ENCODE measurements at regions of chr6 and their contacts with region 1.

Region 1: DNA sequence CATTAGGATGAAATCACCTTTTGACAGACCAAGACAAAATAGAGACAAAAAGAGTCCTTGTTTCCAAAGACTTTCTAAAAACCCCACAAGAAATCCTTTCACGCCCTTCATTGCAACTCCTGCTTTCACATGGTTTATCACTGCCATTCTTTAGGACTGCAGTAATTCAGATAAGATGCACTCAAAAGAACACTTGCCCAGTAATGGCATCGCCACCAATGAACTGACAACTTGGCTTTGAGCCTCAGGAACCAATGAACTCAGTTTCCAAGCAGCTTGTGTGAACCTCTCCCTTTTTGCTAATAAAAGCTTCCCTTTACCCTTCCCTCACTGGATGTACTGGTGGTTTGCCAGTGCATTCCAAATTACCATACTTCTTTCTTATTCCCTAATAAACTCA is 21.8 kb downstream of the OSTM1 start:
- DNase-seq: no peak
- ATAC-seq: no peak
- H3K4me3 ChIP-seq: no peak overlapping the region
- H3K4me3 Mint-ChIP-seq: no peak overlapping the region
- H3K27ac ChIP-seq: no peak overlapping the region
- H3K27ac Mint-ChIP-seq: no peak overlapping the region
- H3K4me1 ChIP-seq: no peaks in the 10 kb centered on the region
- H3K4me1 Mint-ChIP-seq: no peaks in the 10 kb centered on the region
- H3K27me3 ChIP-seq: no peaks in the 10 kb centered on the region
- H3K27me3 Mint-ChIP-seq: no peaks in the 10 kb centered on the region
- CTCF ChIP-seq: no peak

Region 2: GRCh38 chr6:106637717-106638341 is 1414.9 kb before region 1 on chr6:
- CTCF ChIA-PET with region 1: no interaction called
- POLR2A ChIA-PET with region 1: no interaction called
- intact Hi-C with region 1: loop called in 1 of 2 experiments (anchors 10 kb)
- DNase-seq: no peak
- ATAC-seq: no peak
- H3K4me3 ChIP-seq: no peak overlapping the region
- H3K4me3 Mint-ChIP-seq: no peak overlapping the region
- H3K27ac ChIP-seq: no peak overlapping the region
- H3K27ac Mint-ChIP-seq: no peak overlapping the region
- H3K4me1 ChIP-seq: no peaks in the 10 kb centered on the region
- H3K4me1 Mint-ChIP-seq: peaks cover 43% of the 10 kb centered on the region
- H3K27me3 ChIP-seq: no peaks in the 10 kb centered on the region
- H3K27me3 Mint-ChIP-seq: no peaks in the 10 kb centered on the region
- CTCF ChIP-seq: no peak

Region 3: DNA sequence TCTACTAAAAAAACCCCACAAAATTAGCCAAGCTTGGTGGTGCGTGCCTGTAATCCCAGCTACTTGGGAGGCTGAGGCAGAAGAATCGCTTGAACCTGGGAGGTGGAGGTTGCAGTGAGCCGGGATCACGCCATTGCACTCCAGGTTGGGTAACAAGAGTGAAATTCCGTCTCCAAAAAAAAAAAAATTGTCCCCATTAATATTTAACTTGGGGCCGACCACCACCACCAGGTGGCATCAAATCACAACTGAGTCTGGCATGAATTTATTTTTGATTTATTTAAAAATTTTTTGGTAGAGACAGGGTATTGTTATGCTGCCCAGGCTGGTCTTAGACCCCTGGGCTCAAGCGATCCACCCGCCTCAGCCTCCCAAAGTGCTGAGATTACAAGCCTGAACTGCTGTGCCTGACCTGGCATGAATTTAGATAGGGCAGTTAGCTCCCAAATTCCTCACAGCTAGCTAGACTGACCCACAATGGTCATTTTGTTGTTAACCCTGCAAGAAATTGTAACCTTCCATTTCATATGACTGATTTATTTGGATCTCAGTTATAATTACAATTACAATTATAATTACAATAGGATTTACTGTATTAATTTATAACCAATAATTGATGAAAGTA is 920.3 kb before region 1 on chr6:
- CTCF ChIA-PET with region 1: no interaction called
- POLR2A ChIA-PET with region 1: no interaction called
- intact Hi-C with region 1: loop called in 1 of 2 experiments (anchors 2 kb)
- DNase-seq: peak in 5 of 9 experiments; percentile 20 to 44 (median 33)
- ATAC-seq: no peak
- H3K4me3 ChIP-seq: no peak overlapping the region
- H3K4me3 Mint-ChIP-seq: no peak overlapping the region
- H3K27ac ChIP-seq: no peak overlapping the region
- H3K27ac Mint-ChIP-seq: no peak overlapping the region
- H3K4me1 ChIP-seq: no peaks in the 10 kb centered on the region
- H3K4me1 Mint-ChIP-seq: no peaks in the 10 kb centered on the region
- H3K27me3 ChIP-seq: no peaks in the 10 kb centered on the region
- H3K27me3 Mint-ChIP-seq: peaks cover 2% of the 10 kb centered on the region
- CTCF ChIP-seq: peak; percentile 39

Region 4: DNA sequence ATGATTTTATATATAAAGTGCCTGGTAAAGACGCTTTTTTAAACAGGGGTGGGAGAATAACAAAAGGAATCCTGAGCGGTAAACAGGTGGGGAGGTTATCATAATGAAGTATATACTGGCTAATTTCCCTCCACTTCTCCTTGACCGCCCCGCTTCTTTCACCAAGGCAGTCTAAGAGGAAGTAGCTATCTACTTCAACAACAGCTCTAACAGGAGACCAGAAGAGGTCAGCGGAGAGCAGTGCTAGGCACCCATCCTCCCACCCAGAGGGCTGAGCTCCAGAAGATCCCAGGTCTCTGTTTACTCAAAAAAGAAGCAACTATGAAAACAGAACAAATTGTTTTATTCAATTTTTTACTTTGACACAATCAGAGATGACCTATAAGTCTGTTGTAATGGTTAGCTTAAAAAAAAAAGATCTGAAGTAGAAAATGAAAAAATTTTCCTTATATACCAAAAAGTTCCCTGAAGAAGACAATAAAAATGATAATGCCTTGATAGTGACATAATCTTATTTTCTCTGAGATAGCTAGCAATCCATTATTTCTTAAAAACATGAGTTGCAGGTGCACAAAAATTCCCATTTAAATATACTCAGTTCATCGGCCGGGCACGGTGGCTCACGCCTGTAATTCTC is 734.5 kb before region 1 on chr6:
- CTCF ChIA-PET with region 1: interaction called, 3 read pairs
- POLR2A ChIA-PET with region 1: no interaction called
- intact Hi-C with region 1: loop called in 1 of 2 experiments (anchors 10 kb)
- DNase-seq: peak in 3 of 9 experiments; percentile 7 to 49 (median 34)
- ATAC-seq: peak; percentile 49
- H3K4me3 ChIP-seq: no peak overlapping the region
- H3K4me3 Mint-ChIP-seq: no peak overlapping the region
- H3K27ac ChIP-seq: no peak overlapping the region
- H3K27ac Mint-ChIP-seq: no peak overlapping the region
- H3K4me1 ChIP-seq: no peaks in the 10 kb centered on the region
- H3K4me1 Mint-ChIP-seq: peaks cover 3% of the 10 kb centered on the region
- H3K27me3 ChIP-seq: no peaks in the 10 kb centered on the region
- H3K27me3 Mint-ChIP-seq: no peaks in the 10 kb centered on the region
- CTCF ChIP-seq: no peak

Region 5: DNA sequence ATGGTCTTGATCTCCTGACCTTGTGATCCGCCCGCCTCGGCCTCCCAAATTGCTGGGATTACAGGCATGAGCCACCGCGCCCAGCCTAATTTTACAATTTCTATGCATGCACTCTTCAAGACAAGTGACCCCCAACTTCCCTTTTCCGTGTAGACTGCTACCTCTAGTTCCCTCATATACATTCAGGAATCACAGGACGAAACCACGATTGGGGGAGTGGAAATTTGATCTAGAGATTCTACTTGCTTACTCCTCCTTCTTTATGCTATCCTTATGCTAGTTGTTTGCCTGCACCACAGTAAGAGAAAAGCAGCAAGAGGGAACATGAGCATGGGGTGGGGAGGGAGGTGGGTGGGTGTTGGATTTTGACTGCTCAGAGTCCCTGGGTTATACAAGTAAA is 13.0 kb before region 1 on chr6:
- CTCF ChIA-PET with region 1: interaction called, 10 read pairs
- POLR2A ChIA-PET with region 1: no interaction called
- intact Hi-C with region 1: no loop called
- DNase-seq: no peak
- ATAC-seq: no peak
- H3K4me3 ChIP-seq: no peak overlapping the region
- H3K4me3 Mint-ChIP-seq: no peak overlapping the region
- H3K27ac ChIP-seq: no peak overlapping the region
- H3K27ac Mint-ChIP-seq: no peak overlapping the region
- H3K4me1 ChIP-seq: no peaks in the 10 kb centered on the region
- H3K4me1 Mint-ChIP-seq: no peaks in the 10 kb centered on the region
- H3K27me3 ChIP-seq: no peaks in the 10 kb centered on the region
- H3K27me3 Mint-ChIP-seq: no peaks in the 10 kb centered on the region
- CTCF ChIP-seq: no peak